ENCODE measurements at regions of chr17 and their contacts with region 1.

Region 1: GRCh38 chr17:19992803-19993713 is 15.4 kb upstream of the AKAP10 start:
- DNase-seq: peak; percentile 86
- H3K4me3 ChIP-seq: no peak overlapping the region
- H3K27ac ChIP-seq: no peak overlapping the region
- H3K4me1 ChIP-seq: peaks cover 0 to 11% (median 3%) of the 10 kb centered on the region in 4 donors
- H3K27me3 ChIP-seq: no peaks in the 10 kb centered on the region
- CTCF ChIP-seq: peak; percentile 68 to 82 (median 73)
- EP300 ChIP-seq: no peak
- POLR2A ChIP-seq: no peak

Region 2: DNA sequence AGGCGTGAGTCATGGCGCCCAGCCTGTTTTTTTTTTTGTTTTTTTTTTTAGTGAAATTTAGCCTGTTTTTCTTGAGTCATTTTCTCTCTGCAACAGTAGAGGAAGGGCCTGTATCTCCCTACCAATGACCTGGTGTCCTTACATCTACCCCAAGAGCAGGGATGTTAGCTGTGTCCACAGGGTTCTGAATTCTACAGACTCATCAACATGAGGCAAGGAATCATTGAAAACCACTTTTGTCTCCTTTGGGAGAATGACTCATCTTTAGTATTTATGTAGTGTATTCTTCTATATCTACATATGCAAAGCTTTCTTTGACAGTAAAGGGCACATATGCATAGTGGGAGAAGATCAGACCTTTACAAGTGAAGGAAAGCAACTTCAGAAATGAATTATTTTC is 121.4 kb after region 1 on chr17:
- in situ Hi-C with region 1: loop called in 3 of 4 experiments (anchors 5 to 10 kb)
- intact Hi-C with region 1: loop called (anchors 2 kb)
- DNase-seq: no peak
- H3K4me3 ChIP-seq: no peak overlapping the region
- H3K27ac ChIP-seq: no peak overlapping the region
- H3K4me1 ChIP-seq: peaks cover 0 to 3% (median 0%) of the 10 kb centered on the region in 4 donors
- H3K27me3 ChIP-seq: no peaks in the 10 kb centered on the region
- CTCF ChIP-seq: no peak
- EP300 ChIP-seq: no peak
- POLR2A ChIP-seq: no peak

Region 3: DNA sequence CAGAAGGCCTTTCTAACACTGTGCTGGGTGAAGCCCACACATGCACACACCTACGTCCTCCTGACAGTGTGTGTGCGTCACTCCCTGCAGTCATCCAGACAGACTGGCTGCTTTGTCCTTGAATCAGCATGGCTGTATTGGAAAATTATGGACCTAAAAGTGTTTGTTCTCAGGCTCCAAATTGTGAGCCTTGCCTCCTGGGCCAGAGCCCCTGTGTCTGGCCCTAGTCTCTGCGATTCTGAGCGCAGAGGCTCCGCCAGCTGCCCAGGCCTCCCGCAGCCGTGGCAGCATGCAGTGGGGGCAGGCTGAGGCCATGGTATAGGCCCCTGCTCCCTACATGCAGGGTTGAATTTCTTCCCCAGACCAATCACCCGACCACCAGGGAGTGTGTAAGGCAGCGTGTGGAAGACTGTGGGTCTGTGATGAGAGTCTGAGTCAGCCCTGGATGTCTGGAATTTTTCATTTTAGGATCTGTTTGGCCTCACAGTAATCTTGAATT is 307.4 kb after region 1 on chr17:
- in situ Hi-C with region 1: loop called in 1 of 4 experiments (anchors 25 kb)
- intact Hi-C with region 1: no loop called
- DNase-seq: no peak
- H3K4me3 ChIP-seq: no peak overlapping the region
- H3K27ac ChIP-seq: peak overlapping the region; percentile 30 to 78 (median 77)
- H3K4me1 ChIP-seq: peaks cover 0 to 10% (median 0%) of the 10 kb centered on the region in 4 donors
- H3K27me3 ChIP-seq: no peaks in the 10 kb centered on the region
- CTCF ChIP-seq: no peak
- EP300 ChIP-seq: no peak
- POLR2A ChIP-seq: no peak

Region 4: DNA sequence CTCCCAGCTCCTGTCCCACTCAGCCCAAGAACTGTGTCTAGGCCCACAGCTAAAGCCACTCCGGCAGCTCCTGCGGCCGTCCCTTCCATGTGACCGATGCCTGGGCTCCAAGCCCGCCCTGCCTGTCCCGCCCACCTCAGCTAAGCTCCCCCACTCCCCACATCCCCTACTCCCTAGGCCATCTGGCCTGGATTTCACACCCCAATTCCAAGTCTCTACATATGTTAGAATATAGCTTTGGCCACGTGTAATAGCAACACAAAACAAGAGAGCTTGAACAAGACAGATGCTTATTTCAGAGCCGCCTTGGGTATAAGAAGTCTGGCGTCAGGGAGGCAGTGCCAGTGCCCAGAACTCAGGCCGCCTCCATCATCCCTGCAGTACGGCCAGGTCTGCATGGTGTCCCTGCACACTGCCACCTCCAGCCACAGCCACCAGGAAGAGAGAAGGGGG is 1079.7 kb after region 1 on chr17:
- in situ Hi-C with region 1: no loop called
- intact Hi-C with region 1: no loop called
- DNase-seq: no peak
- H3K4me3 ChIP-seq: no peak overlapping the region
- H3K27ac ChIP-seq: no peak overlapping the region
- H3K4me1 ChIP-seq: peaks cover 0 to 4% (median 2%) of the 10 kb centered on the region in 4 donors
- H3K27me3 ChIP-seq: no peaks in the 10 kb centered on the region
- CTCF ChIP-seq: no peak
- EP300 ChIP-seq: no peak
- POLR2A ChIP-seq: no peak

Measured in transverse colon (tissue), 4 donors.